ENCODE measurements at regions of chr4 and their contacts with region 1.

Region 1: DNA sequence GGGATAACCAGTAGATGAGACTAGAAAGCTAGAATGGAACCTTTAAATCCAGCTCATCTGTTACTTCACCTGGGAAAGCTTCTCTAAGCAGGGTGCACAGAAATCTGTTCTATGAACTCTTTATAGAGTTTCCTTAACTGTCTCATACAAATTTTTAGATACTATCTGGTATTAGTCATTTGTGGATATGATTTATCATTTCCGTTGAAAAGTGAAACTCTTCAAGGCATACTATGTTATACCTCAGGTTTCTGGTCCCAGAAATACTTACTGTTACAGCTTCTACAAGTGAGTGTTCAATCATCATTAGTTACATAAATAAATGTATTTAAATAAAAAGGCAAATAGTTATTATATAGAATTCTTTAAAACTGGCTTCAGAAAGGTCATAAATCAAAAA is 298.3 kb upstream of the AGA start:
- DNase-seq: no peak
- ATAC-seq: no peak
- H3K4me3 ChIP-seq: no peak overlapping the region
- H3K27ac ChIP-seq: no peak overlapping the region
- H3K4me1 ChIP-seq: no peaks in the 10 kb centered on the region
- H3K27me3 ChIP-seq: no peaks in the 10 kb centered on the region
- CTCF ChIP-seq: no peak
- EP300 ChIP-seq: no peak
- POLR2A ChIP-seq: no peak
- RAD21 ChIP-seq: no peak

Region 2: DNA sequence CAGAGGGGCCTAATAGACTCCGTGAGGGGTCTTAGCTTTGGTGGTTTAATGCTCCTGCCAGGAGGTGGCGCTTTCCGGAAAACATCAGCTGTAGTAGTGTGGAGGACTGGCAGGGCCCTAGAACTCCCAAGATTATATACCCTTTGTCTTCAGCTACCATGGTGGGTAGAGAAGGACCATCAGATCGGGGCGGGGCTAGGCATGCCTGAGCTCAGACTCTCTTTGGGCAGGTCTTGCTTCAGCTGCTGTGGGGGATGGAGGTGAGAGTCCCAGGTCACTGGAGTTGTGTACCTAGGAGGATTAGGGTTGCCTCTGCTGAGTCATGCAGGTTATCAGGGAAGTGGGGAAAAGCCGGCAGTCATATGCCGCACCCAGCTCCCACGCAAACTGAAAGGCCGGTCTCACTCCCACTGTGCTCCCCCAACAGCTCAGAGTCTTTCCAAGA is 235.4 kb before region 1 on chr4:
- CTCF ChIA-PET with region 1: no interaction called
- POLR2A ChIA-PET with region 1: no interaction called
- in situ Hi-C with region 1: no loop called
- intact Hi-C with region 1: loop called (anchors 5 kb)
- DNase-seq: no peak
- ATAC-seq: peak; percentile 64
- H3K4me3 ChIP-seq: no peak overlapping the region
- H3K27ac ChIP-seq: no peak overlapping the region
- H3K4me1 ChIP-seq: no peaks in the 10 kb centered on the region
- H3K27me3 ChIP-seq: no peaks in the 10 kb centered on the region
- CTCF ChIP-seq: no peak
- EP300 ChIP-seq: no peak
- POLR2A ChIP-seq: no peak
- RAD21 ChIP-seq: no peak

Measured in HepG2 (cell line).